Natural killer cell (primary cell): ENCODE measurements at regions of chr18 and their contacts with region 1.

Region 1: GRCh38 chr18:45690975-45691815 is 32.8 kb upstream of the SLC14A1 start:
- DNase-seq: peak; percentile 74 to 88
- ATAC-seq: no peak
- H3K4me3 ChIP-seq: no peak overlapping the region
- H3K4me3 Mint-ChIP-seq: no peak overlapping the region
- H3K27ac ChIP-seq: no peak overlapping the region
- H3K27ac Mint-ChIP-seq: peak overlapping the region in 1 of 2 donors; percentile 52
- H3K4me1 ChIP-seq: peaks cover 44% of the 10 kb centered on the region
- H3K4me1 Mint-ChIP-seq: peaks cover 44 to 49% of the 10 kb centered on the region in 2 donors
- H3K27me3 ChIP-seq: no peaks in the 10 kb centered on the region
- H3K27me3 Mint-ChIP-seq: peaks cover 0 to 2% of the 10 kb centered on the region in 2 donors
- CTCF ChIP-seq: peak; percentile 92

Region 2: DNA sequence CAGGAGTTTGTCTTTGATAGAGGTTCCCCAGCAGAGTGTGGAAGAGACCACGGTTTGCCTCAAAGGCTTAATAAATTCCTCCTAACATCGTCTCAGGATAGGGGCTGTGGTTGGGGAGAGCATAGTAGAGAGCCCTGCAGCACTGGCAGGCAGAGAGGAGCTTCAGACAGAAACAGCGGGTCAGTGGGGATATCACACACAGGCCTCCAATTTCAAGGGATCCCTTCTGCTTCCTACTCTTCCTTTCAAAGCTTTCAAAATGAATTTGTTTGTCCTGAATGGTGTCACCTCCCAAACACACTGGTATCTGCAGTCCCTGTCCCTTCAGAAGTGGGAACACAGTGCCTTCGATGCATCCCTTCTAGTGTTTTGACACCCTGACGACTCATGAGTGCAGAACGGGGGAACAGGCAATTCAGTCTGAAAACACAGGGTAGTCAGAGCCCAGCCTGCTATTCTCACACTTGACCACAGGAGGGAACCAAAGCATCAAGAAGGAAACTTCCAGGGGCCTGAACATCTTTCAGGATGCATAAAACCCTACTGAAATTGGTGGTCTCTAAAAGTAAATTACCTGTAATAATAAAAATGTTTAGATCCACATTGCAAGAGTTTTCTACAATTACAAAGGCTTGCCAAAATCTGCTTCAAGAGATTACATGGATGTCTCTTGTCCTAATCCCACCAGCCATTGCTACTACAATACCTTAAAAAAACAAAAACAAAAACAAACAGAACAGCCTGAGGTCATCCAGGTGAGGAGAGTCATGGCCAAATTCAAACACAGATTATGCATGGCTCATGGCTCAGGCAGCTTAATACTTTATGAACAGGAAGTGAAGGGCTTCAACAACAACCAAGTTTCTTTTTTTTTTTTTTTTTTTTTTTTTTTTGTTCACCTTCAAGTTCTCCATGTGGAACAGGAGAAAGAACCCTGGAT is 26.1 kb before region 1 on chr18:
- intact Hi-C with region 1: loop called (anchors 1 kb)
- DNase-seq: peak; percentile 53 to 88
- ATAC-seq: peak; percentile 78 to 89 (median 86)
- H3K4me3 ChIP-seq: no peak overlapping the region
- H3K4me3 Mint-ChIP-seq: peak overlapping the region; percentile 82
- H3K27ac ChIP-seq: peak overlapping the region; percentile 49
- H3K27ac Mint-ChIP-seq: peak overlapping the region; percentile 85 to 88
- H3K4me1 ChIP-seq: peaks cover 41% of the 10 kb centered on the region
- H3K4me1 Mint-ChIP-seq: peaks cover 35 to 55% of the 10 kb centered on the region in 2 donors
- H3K27me3 ChIP-seq: no peaks in the 10 kb centered on the region
- H3K27me3 Mint-ChIP-seq: no peaks in the 10 kb centered on the region
- CTCF ChIP-seq: peak; percentile 96

Region 3: DNA sequence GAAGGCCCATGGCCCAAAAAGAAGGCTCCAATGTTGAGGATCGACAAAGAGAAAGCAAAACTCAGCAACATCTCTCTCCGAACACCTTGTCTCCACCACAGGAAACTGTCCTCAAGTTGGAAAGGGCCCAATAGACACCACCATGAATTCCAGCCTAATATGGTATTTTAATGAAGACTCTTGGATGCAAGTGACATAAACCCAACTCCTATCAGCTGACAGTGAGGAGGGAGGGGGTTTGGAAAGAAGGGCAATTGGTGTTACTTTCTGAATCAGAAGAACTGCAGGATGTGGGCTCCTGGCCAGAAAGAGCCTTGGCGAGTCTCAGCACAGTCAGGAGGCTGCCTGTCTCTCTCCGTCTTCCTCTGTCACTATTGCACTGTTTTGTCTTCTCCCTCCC is 93.9 kb after region 1 on chr18:
- intact Hi-C with region 1: loop called (anchors 2 kb)
- DNase-seq: peak; percentile 37 to 50
- ATAC-seq: peak; percentile 92 to 99 (median 96)
- H3K4me3 ChIP-seq: peak overlapping the region; percentile 12
- H3K4me3 Mint-ChIP-seq: peak overlapping the region; percentile 32
- H3K27ac ChIP-seq: peak overlapping the region; percentile 55
- H3K27ac Mint-ChIP-seq: peak overlapping the region; percentile 67 to 84
- H3K4me1 ChIP-seq: peaks cover 19% of the 10 kb centered on the region
- H3K4me1 Mint-ChIP-seq: peaks cover 12 to 18% of the 10 kb centered on the region in 2 donors
- H3K27me3 ChIP-seq: no peaks in the 10 kb centered on the region
- H3K27me3 Mint-ChIP-seq: peaks cover 0 to 3% of the 10 kb centered on the region in 2 donors
- CTCF ChIP-seq: no peak

Region 4: DNA sequence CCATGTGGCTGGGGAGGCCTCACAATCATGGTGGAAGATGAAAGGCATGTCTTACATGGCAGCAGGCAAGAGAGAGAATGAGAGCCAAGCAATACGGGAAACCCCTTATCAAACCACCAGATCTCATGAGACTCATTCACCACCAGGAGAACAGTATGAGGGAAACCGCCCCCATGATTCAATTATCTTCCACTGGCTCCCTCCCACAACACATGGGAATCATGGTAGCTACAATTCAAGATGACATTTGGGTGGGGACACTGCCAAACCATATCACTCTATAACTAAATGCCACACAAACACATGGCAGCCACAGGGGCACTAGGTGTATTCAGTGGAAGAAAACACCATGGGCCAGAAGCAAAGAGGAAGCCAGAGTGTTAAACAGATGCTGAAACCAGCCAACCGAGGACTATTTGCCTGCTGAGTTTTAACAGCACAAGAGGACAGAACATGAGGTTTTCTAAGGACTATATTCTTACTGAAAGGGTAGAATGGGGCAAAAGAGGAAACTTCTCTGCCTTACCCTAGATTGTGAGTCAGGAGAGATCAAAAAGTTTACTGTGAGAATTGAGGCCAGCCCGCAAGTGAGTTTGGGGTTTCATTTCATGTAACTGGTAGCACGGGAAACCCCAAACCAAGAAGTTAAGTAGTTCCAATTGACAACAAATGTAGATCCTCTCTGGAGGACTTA is 183.4 kb after region 1 on chr18:
- intact Hi-C with region 1: loop called (anchors 5 kb)
- DNase-seq: peak; percentile 48 to 80
- ATAC-seq: peak; percentile 81 to 87 (median 82)
- H3K4me3 ChIP-seq: no peak overlapping the region
- H3K4me3 Mint-ChIP-seq: peak overlapping the region; percentile 61
- H3K27ac ChIP-seq: peak overlapping the region; percentile 63
- H3K27ac Mint-ChIP-seq: peak overlapping the region; percentile 84 to 86
- H3K4me1 ChIP-seq: peaks cover 20% of the 10 kb centered on the region
- H3K4me1 Mint-ChIP-seq: peaks cover 32 to 38% of the 10 kb centered on the region in 2 donors
- H3K27me3 ChIP-seq: no peaks in the 10 kb centered on the region
- H3K27me3 Mint-ChIP-seq: no peaks in the 10 kb centered on the region
- CTCF ChIP-seq: no peak

Region 5: DNA sequence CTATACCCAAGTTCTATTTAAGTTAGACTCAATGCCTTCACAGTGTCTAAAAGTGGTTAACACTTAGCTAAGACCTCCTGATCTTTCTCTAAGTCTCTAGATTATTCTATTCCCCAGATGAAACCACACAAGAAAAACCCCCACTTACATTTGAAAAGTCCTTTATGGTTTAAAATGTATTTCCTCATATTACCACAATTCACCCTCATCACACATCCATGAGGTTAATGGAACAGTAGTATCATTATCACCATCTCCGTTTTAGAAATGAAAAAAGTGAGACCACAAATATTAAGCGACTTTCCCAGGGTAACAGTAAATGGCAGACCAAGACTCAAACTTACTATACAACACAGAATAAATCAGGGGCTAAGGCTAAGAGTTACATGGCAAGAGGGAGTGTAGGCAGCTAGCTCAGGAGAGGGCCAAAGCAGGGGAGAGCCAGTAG is 247.3 kb after region 1 on chr18:
- intact Hi-C with region 1: loop called (anchors 1 kb)
- DNase-seq: peak in 1 of 2 donors; percentile 72
- ATAC-seq: peak; percentile 79 to 92 (median 91)
- H3K4me3 ChIP-seq: no peak overlapping the region
- H3K4me3 Mint-ChIP-seq: peak overlapping the region; percentile 83
- H3K27ac ChIP-seq: peak overlapping the region; percentile 79
- H3K27ac Mint-ChIP-seq: peak overlapping the region; percentile 86 to 89
- H3K4me1 ChIP-seq: peaks cover 19% of the 10 kb centered on the region
- H3K4me1 Mint-ChIP-seq: peaks cover 47 to 51% of the 10 kb centered on the region in 2 donors
- H3K27me3 ChIP-seq: no peaks in the 10 kb centered on the region
- H3K27me3 Mint-ChIP-seq: no peaks in the 10 kb centered on the region
- CTCF ChIP-seq: no peak

Region 6: GRCh38 chr18:45974088-45974536 is 282.9 kb after region 1 on chr18:
- intact Hi-C with region 1: loop called (anchors 1 kb)
- DNase-seq: peak; percentile 57 to 82
- ATAC-seq: peak; percentile 90 to 97 (median 96)
- H3K4me3 ChIP-seq: no peak overlapping the region
- H3K4me3 Mint-ChIP-seq: no peak overlapping the region
- H3K27ac ChIP-seq: no peak overlapping the region
- H3K27ac Mint-ChIP-seq: no peak overlapping the region
- H3K4me1 ChIP-seq: no peaks in the 10 kb centered on the region
- H3K4me1 Mint-ChIP-seq: peaks cover 0 to 7% of the 10 kb centered on the region in 2 donors
- H3K27me3 ChIP-seq: no peaks in the 10 kb centered on the region
- H3K27me3 Mint-ChIP-seq: no peaks in the 10 kb centered on the region
- CTCF ChIP-seq: peak; percentile 83

Region 7: DNA sequence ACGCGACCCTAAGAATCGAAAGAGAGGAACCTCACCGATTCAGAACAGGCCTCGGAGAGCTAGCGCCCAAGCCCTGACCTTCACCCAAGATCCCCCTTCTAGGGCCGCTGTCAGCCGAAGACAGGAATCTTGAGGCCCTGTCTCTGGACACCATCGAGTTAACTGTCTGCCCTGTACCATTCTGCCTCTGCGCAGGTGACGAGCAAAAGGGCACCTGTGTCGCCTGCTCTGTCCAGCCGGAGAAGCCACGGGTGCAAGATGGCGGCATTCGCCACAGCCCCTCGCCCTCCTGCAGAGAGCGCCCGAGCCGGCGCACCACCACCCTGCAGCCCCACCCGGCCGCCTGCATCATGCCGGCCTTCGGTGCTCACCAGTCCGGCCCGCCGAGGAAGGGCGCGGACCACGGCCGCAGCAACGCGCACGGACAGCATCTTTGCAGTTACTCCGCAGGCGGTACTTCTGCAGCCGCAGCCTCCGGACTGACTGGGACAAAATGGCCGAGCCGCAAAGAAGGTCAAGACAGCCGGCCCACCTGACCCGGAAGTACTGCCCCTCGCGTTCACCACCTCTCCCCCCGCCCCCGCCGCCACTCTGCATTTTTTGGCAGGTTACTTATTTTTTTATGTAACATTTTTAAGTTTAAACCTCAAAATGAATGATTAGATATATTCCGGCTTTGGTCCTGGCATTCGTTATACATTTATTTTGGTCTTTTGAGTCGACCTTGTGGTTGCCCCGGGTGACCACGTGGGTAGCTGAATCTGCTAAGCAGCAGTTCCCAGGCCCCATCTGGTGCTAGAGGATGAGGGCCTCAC is 406.8 kb after region 1 on chr18 and contains the start of gene ATP5F1A:
- intact Hi-C with region 1: loop called (anchors 5 kb)
- DNase-seq: peak; percentile 84 to 92
- ATAC-seq: peak; percentile 90 to 94 (median 90)
- H3K4me3 ChIP-seq: peak within 1 kb of the TSS; percentile 71
- H3K4me3 Mint-ChIP-seq: peak within 1 kb of the TSS; percentile 98
- H3K27ac ChIP-seq: peak within 1 kb of the TSS; percentile 81
- H3K27ac Mint-ChIP-seq: peak within 1 kb of the TSS; percentile 94 to 95
- H3K4me1 ChIP-seq: peaks cover 25% of the 10 kb centered on the region
- H3K4me1 Mint-ChIP-seq: peaks cover 25 to 27% of the 10 kb centered on the region in 2 donors
- H3K27me3 ChIP-seq: no peaks in the 10 kb centered on the region
- H3K27me3 Mint-ChIP-seq: no peaks in the 10 kb centered on the region
- CTCF ChIP-seq: no peak
- total RNA-seq, gene ATP5F1A: 209 to 218 (median 218) TPM